ENCODE measurements at regions of chr10 and their contacts with region 1.

Region 1: DNA sequence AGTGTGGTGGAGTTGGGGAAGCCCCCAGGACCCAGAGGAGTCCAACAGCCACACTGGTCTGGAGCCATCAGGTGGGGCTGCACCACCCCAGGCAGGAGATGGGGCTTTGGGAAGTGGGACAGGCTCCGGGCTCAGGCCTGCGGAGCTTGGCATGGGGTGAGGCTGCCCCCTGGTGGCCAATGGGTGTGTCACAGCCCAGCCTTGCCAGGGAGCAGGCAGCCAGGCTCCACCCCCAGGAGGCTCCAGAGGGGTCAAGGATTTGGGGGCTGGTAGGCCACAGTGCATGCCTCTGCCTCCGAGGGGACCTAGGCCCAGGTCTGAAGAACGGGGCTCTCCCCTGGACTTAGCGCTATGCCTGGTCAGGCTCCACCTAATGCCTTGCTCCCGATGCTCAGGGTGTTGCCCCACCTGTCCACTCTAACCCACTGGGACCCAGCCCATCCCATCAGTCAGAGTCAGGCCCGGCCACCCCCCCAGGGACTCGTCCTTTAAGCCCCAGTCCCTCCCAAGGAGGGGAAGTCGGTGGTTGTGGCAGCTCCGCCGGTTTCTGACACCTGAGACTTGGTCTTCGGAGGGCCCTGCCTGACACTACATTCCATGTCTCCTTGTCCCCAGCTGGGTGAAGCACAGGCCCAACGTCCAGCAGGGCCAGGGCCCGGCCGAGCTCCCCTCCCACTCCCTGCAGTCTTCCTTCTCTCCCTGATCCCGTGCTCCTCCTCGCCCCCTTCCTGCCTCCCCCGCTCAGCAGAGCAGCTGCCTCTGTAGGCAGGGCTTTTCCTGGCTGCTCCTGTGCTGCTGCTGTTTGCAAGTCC is 11.3 kb upstream of the SAMD8 start:
- DNase-seq: peak; percentile 85
- ATAC-seq: peak; percentile 99
- H3K4me3 Mint-ChIP-seq: no peak overlapping the region
- H3K27ac Mint-ChIP-seq: peak overlapping the region; percentile 30
- H3K4me1 Mint-ChIP-seq: peaks cover 7% of the 10 kb centered on the region
- H3K27me3 Mint-ChIP-seq: no peaks in the 10 kb centered on the region
- CTCF ChIP-seq: peak; percentile 99

Region 2: GRCh38 chr10:74244097-74244685 is 856.0 kb before region 1 on chr10:
- CTCF ChIA-PET with region 1: interaction called, 11 read pairs
- POLR2A ChIA-PET with region 1: no interaction called
- intact Hi-C with region 1: loop called (anchors 5 kb)
- DNase-seq: peak; percentile 50
- ATAC-seq: no peak
- H3K4me3 Mint-ChIP-seq: no peak overlapping the region
- H3K27ac Mint-ChIP-seq: no peak overlapping the region
- H3K4me1 Mint-ChIP-seq: peaks cover 2% of the 10 kb centered on the region
- H3K27me3 Mint-ChIP-seq: no peaks in the 10 kb centered on the region
- CTCF ChIP-seq: peak; percentile 64

Region 3: DNA sequence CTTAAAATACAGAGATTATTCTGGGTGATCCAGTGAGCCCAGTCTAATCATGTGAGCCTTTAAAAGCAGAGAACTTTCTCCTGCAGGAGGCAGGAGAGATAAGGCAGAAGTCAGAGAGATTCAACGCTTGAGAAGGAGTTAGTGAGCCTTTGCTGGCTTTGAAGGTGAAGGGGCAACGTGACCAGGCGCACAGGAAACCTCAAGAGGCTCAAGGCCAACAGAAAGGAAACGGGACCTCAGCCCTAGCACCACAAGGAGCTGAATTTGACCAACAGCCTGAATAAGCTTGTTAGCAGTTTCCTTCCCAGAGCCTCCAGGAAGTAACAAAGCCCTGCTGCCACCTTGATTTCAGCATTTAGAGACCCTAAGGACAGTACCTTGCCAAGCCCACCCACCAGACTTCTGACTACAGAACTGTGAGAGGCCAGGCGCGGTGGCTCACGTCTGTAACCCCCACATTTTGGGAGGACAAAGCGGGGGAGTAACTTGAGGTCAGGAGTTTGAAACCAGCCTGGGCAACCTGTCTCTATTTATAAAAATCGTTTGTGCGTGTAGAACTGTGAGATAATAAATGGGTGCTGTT is 361.1 kb before region 1 on chr10:
- CTCF ChIA-PET with region 1: interaction called, 14 read pairs
- POLR2A ChIA-PET with region 1: no interaction called
- intact Hi-C with region 1: loop called (anchors 10 kb)
- DNase-seq: peak; percentile 71
- ATAC-seq: peak; percentile 89
- H3K4me3 Mint-ChIP-seq: peak overlapping the region; percentile 32
- H3K27ac Mint-ChIP-seq: peak overlapping the region; percentile 90
- H3K4me1 Mint-ChIP-seq: peaks cover 20% of the 10 kb centered on the region
- H3K27me3 Mint-ChIP-seq: no peaks in the 10 kb centered on the region
- CTCF ChIP-seq: no peak

Region 4: DNA sequence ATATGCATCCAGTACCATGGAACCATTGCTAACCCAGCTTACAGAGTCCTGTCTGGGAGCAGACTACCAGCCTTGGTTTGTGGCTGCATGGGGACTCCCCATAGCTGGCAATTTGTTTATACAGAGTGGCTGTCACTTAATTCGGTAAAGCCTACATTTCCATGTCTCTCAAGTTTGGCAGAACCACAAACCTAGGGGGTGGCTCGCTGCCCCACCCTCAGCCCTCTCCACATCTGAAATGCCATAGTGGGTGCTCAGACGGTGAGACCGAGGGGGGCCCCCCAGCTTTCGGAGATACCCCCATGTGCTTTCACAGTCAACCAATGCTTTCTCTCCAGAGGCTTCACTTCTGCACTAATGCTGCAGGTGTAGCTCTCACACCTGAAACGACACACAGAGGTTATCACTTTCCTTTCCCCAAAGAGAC is 349.3 kb before region 1 on chr10:
- CTCF ChIA-PET with region 1: interaction called, 3 read pairs
- POLR2A ChIA-PET with region 1: no interaction called
- intact Hi-C with region 1: loop called (anchors 10 kb)
- DNase-seq: peak; percentile 69
- ATAC-seq: peak; percentile 90
- H3K4me3 Mint-ChIP-seq: no peak overlapping the region
- H3K27ac Mint-ChIP-seq: no peak overlapping the region
- H3K4me1 Mint-ChIP-seq: peaks cover 19% of the 10 kb centered on the region
- H3K27me3 Mint-ChIP-seq: no peaks in the 10 kb centered on the region
- CTCF ChIP-seq: no peak

Region 5: GRCh38 chr10:74837743-74838142 is 262.4 kb before region 1 on chr10:
- CTCF ChIA-PET with region 1: no interaction called
- POLR2A ChIA-PET with region 1: no interaction called
- intact Hi-C with region 1: no loop called
- DNase-seq: no peak
- ATAC-seq: no peak
- H3K4me3 Mint-ChIP-seq: no peak overlapping the region
- H3K27ac Mint-ChIP-seq: peak overlapping the region; percentile 35
- H3K4me1 Mint-ChIP-seq: peaks cover 53% of the 10 kb centered on the region
- H3K27me3 Mint-ChIP-seq: no peaks in the 10 kb centered on the region
- CTCF ChIP-seq: no peak

Region 6: DNA sequence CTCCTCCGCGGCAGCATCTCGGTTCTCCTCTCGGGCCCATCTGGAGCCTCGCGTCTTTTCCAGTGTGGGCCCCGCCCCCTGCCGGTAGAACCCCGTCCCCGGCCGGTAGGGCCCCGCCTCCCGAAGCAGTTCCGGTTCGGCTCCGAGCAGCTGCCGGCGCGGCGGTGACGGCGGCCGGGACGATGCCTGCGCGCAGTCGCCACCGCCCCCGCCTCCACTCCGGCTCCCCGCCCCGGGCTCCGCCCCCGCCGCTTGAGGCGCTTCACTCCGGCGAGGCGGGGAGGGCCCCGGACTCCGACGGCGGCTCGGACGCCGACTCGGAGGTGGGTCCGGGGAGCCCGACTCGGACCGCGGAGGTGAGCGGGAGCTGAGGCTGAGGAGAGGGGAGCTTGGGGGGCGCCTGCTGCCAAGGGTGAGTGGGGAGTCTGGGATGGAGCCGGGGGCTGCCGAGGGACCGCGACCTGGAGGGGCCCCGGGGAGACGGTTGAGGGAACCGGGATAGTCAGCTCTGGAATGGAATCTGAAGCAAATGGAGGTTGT is 11.3 kb after region 1 on chr10 and contains the start of gene SAMD8:
- CTCF ChIA-PET with region 1: interaction called, 11 read pairs
- POLR2A ChIA-PET with region 1: interaction called, 3 read pairs
- intact Hi-C with region 1: no loop called
- DNase-seq: peak; percentile 99
- ATAC-seq: peak; percentile 91
- H3K4me3 Mint-ChIP-seq: peak within 1 kb of the TSS; percentile 88
- H3K27ac Mint-ChIP-seq: peak within 1 kb of the TSS; percentile 93
- H3K4me1 Mint-ChIP-seq: peaks cover 46% of the 10 kb centered on the region
- H3K27me3 Mint-ChIP-seq: no peaks in the 10 kb centered on the region
- CTCF ChIP-seq: no peak
- total RNA-seq, gene SAMD8: 21.9 to 23.7 TPM